Endothelial cell of umbilical vein (primary cell): ENCODE measurements at regions of chr5 and their contacts with region 1.

Region 1: DNA sequence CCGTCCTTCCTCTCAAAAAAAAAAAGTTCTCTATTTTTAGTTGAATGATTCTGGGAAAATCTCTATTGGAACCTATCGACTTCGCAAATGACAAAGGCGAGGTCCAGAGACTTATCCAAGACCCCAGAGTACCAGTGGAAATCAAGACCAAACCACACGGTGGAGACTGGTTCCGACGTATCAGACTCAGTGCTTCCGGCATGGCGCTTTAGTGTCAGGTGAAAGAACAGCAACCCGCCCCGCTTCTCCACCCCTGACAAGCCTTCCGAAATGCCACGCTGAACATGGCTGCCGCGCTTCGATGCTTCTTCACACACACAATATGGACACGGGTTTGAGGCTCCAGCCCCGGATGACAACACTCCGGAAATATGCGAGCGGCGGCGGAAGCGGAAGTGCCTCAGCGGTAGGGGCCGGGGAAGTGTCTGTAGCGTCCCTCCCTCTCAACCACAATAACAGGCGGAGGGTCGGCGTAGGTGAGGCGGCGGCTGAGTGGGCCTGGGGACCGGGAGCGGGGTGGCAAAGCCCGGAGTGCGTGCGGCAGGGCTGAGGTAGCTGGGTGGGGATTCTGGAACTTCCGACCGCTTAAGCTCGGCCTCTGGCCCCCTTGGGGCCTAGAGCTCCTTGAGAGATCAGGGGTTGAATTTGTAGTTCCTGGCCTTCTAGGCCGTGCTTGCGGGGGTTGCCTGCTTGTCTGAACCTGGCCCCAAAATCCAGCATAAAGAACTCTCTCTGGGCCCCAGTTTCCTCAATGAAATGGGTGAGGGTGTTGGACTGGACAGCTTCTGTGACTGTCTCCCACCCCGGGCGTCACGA is at the start of gene FBXO38:
- DNase-seq: peak; percentile 97
- H3K4me3 ChIP-seq: peak within 1 kb of the TSS; percentile 66 to 97 (median 69)
- H3K27ac ChIP-seq: peak within 1 kb of the TSS; percentile 97
- H3K4me1 ChIP-seq: peaks cover 58% of the 10 kb centered on the region
- H3K27me3 ChIP-seq: no peaks in the 10 kb centered on the region
- CTCF ChIP-seq: no peak
- POLR2A ChIP-seq: peak; percentile 79
- total RNA-seq, gene FBXO38: 52.9 and 65.6 TPM in 2 replicates

Region 2: GRCh38 chr5:147509710-147510651 is 873.8 kb before region 1 on chr5 and contains the start of gene DPYSL3:
- CTCF ChIA-PET with region 1: no interaction called
- POLR2A ChIA-PET with region 1: no interaction called
- dilution Hi-C with region 1: no loop called
- intact Hi-C with region 1: loop called (anchors 10 kb)
- DNase-seq: peak; percentile 90
- H3K4me3 ChIP-seq: peak within 1 kb of the TSS; percentile 46 to 85 (median 79)
- H3K27ac ChIP-seq: peak within 1 kb of the TSS; percentile 67
- H3K4me1 ChIP-seq: peaks cover 26% of the 10 kb centered on the region
- H3K27me3 ChIP-seq: no peaks in the 10 kb centered on the region
- CTCF ChIP-seq: peak; percentile 25 to 55
- POLR2A ChIP-seq: peak; percentile 60
- total RNA-seq, gene DPYSL3: 142 and 146 TPM in 2 replicates

Region 3: DNA sequence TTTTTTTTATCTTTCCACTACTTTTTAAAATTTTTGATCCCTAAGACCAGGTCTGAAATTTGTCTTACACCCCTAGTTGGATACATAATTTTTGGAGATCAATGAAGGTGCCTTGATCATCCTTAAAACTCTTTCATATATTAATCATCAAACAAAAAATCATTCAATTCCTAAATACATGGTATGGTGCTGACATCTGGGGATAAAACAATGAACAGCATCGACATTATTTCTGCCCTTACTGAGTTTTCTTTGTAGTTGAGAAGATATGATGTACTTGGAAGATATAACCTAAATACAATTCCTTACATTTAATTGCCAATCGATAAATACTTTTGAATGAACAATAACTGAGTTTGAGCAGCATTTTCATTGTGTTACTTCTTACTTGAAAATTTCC is 30.1 kb before region 1 on chr5:
- CTCF ChIA-PET with region 1: no interaction called
- POLR2A ChIA-PET with region 1: no interaction called
- dilution Hi-C with region 1: no loop called
- intact Hi-C with region 1: no loop called
- DNase-seq: no peak
- H3K4me3 ChIP-seq: no peak overlapping the region
- H3K27ac ChIP-seq: no peak overlapping the region
- H3K4me1 ChIP-seq: no peaks in the 10 kb centered on the region
- H3K27me3 ChIP-seq: no peaks in the 10 kb centered on the region
- CTCF ChIP-seq: no peak
- POLR2A ChIP-seq: no peak

Region 4: GRCh38 chr5:148397968-148398597 is 14.3 kb after region 1 on chr5:
- CTCF ChIA-PET with region 1: interaction called, 10 read pairs
- POLR2A ChIA-PET with region 1: interaction called, 6 read pairs
- dilution Hi-C with region 1: no loop called
- intact Hi-C with region 1: loop called (anchors 1 kb)
- DNase-seq: no peak
- H3K4me3 ChIP-seq: no peak overlapping the region
- H3K27ac ChIP-seq: peak overlapping the region; percentile 55
- H3K4me1 ChIP-seq: peaks cover 45% of the 10 kb centered on the region
- H3K27me3 ChIP-seq: no peaks in the 10 kb centered on the region
- CTCF ChIP-seq: no peak
- POLR2A ChIP-seq: no peak

Region 5: DNA sequence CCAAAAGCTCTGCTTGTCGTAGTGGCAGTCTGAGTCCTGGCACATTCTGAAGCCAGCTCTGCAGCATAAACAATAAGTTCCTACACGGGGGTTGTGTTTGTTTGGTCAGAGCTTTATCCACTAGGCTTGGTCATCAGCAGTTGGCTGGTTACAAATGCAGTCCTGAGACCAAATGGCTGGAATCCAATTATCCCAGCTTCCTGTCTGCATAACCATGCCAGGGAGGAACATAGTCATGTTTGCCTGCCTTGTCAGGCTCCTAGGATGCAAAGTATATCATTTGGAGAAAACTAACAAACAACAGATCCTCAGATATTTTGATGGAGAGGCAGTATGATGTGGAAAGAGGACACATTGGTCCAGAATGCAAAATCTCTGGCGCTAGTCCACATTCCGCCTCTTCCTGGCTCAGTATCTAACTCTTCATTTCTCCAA is 85.7 kb after region 1 on chr5:
- CTCF ChIA-PET with region 1: no interaction called
- POLR2A ChIA-PET with region 1: interaction called, 3 read pairs
- dilution Hi-C with region 1: no loop called
- intact Hi-C with region 1: loop called (anchors 2 kb)
- DNase-seq: peak; percentile 92
- H3K4me3 ChIP-seq: no peak overlapping the region
- H3K27ac ChIP-seq: peak overlapping the region; percentile 82
- H3K4me1 ChIP-seq: peaks cover 55% of the 10 kb centered on the region
- H3K27me3 ChIP-seq: no peaks in the 10 kb centered on the region
- CTCF ChIP-seq: no peak
- POLR2A ChIP-seq: no peak

Region 6: DNA sequence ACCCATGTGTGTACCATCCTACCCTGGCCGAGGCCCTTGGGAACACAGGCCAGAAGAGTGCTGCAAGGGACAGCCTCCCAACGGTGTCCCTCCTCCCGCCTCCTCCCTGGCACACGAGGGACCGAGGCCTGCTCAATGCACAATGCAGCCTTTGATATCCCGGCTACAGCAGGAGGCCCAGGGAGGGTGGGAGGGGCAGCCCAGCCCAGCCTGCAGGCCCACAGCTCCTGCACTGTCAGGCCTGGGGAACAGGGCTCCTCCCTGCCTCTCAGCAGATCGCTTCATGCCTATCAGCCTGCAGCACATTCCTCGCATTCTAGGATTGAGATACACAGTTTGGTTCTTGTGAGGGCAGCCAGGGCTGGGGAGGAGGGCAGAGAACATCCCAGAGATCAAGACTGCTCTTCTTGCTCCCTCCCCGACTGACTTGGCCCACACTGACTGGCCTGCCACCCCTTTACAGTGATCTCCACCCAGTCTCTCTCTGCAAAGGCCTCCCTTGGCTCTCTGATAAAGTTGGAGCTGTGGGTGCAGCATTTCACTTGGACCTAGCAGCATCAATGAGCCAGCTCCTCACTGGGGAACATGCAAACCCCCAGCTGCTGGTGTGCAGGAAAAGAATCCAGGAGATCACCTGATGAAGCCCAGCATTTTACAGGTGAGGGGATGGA is 679.4 kb after region 1 on chr5 and contains the start of gene SH3TC2:
- CTCF ChIA-PET with region 1: no interaction called
- POLR2A ChIA-PET with region 1: no interaction called
- dilution Hi-C with region 1: no loop called
- intact Hi-C with region 1: loop called (anchors 5 kb)
- DNase-seq: peak; percentile 28
- H3K4me3 ChIP-seq: no peak within 1 kb of the TSS
- H3K27ac ChIP-seq: peak within 1 kb of the TSS; percentile 97
- H3K4me1 ChIP-seq: peaks cover 39% of the 10 kb centered on the region
- H3K27me3 ChIP-seq: no peaks in the 10 kb centered on the region
- CTCF ChIP-seq: no peak
- POLR2A ChIP-seq: peak; percentile 18
- total RNA-seq, gene SH3TC2: 3.3 and 4.3 TPM in 2 replicates